HEK293 (cell line): ENCODE measurements at regions of chr7 and their contacts with region 1.

Region 1: GRCh38 chr7:106176414-106177299 is 64.5 kb upstream of the SYPL1 start:
- H3K4me3 ChIP-seq: no peak overlapping the region
- H3K27ac ChIP-seq: no peak overlapping the region
- H3K4me1 ChIP-seq: no peaks in the 10 kb centered on the region
- CTCF ChIP-seq: peak; percentile 95

Region 2: DNA sequence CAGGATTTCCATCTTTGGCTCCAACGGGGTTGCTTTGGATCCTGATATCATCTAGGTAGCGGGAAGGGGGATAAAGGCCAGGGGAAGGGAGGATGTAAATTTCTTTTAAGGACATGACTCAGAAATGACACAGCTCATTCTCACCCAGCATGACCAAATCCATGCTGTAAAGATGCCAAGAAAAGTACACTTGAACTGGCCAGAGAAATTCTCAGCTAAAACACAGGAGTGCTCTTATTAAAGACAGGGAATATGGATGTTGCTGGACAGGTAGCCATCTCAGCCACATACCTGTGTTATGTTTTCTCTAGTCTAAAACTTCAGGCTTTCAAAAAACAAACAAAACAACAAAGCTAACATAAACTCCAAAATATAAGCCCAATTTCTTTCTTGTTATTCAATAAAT is 39.9 kb after region 1 on chr7:
- CTCF ChIA-PET with region 1: interaction called, 10 read pairs
- POLR2A ChIA-PET with region 1: no interaction called
- H3K4me3 ChIP-seq: no peak overlapping the region
- H3K27ac ChIP-seq: no peak overlapping the region
- H3K4me1 ChIP-seq: 0 out of 2 replicates have a peak, but pooled peaks cover 3% of the 10 kb centered on the region
- CTCF ChIP-seq: no peak

Region 3: DNA sequence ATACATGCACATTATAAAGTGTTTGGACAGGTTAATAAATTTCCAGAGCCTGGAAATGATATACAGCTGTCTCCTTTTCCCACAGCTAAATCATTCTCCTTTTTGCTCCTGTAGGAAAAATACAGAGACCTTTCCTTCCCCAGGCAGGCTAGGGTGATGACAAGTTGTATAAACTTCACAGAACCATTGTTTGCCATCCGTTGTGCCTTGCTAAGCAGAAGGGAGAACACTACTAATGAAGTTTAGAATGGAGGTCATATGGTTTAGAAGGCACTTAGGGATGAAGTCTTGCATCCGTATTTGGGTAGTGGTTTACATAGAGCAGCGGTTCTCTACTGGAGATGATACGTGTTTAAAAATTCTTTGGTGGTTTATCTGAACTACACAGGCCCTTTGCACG is 62.2 kb after region 1 on chr7:
- CTCF ChIA-PET with region 1: no interaction called
- POLR2A ChIA-PET with region 1: no interaction called
- H3K4me3 ChIP-seq: no peak overlapping the region
- H3K27ac ChIP-seq: no peak overlapping the region
- H3K4me1 ChIP-seq: no peaks in the 10 kb centered on the region
- CTCF ChIP-seq: no peak

Region 4: DNA sequence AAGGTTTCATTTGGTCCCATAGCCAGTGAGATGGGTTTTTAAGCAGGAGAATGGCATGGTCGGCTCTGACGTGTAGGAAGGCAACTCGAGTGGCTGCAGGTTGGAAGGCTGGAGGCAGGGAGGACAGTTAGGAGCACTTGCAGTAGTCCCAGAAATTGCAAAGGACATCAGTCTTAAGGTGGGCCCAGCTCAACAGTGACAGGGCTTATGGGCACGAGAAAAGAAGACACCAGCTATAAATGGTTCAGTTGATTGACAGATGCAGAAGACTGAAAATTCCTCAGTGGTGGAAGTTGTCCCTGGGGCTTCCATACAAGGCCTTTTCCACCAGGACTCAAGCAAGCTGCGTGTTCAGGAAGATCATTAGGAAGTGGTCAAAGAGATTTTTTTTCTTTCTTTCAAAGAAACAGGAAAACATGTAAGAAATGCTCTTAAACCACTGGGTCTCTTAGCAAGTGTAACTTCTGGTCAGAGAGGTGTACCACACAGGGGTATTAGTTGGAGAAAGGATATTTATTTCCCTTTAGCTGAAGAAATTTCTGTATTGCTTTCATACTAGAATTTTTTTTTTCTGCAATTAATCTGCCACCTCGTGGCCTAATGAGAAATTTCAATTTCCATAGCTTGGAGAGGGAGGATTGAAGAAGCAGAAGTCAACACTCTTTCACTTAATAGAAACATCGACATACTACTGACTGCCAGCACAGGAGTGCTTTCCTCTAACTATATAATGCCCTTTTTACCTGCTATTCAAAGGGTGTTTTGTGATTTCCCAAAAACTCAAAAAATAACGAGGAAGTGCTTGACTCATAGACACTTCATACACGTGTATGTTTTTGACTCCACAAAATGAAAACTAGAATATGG is 285.6 kb after region 1 on chr7:
- CTCF ChIA-PET with region 1: interaction called, 164 read pairs
- POLR2A ChIA-PET with region 1: interaction called, 5 read pairs
- H3K4me3 ChIP-seq: no peak overlapping the region
- H3K27ac ChIP-seq: no peak overlapping the region
- H3K4me1 ChIP-seq: no peaks in the 10 kb centered on the region
- CTCF ChIP-seq: peak; percentile 27; the same call in 1 of the 2 replicates

Region 5: DNA sequence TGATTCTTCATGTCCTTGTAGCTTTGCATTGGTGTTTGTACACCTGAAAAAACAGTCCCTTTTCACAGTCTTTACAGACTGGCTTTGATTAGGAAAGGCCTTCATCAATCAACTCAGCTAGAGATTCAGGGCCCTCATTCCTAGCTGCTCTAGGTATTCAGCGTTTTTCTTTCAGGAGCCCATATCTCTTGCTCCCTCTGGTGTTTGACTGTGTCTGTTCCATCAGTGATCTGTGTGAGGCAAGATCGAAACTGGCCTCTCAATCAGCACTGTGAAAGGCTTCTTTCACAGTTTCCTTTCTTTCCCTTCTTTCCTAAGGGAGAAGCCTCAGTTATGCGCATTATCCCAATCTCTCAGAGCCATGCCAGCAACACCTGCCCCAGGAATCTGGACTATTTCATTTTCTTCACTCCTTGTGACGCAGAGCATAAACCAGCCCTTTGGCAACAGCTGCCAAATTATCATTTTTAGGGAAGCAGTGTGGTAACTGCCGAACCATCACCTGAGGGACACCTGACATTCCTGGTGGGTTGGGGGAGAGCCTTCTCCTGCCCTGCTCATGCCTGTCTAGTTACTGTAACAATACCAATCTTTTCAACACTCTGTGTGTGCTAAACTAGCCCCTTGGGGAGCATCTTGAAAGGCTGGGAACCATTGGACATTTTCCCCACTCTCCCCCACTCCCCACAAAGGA is 560.0 kb after region 1 on chr7:
- CTCF ChIA-PET with region 1: interaction called, 18 read pairs
- POLR2A ChIA-PET with region 1: interaction called, 3 read pairs
- H3K4me3 ChIP-seq: no peak overlapping the region
- H3K27ac ChIP-seq: no peak overlapping the region
- H3K4me1 ChIP-seq: no peaks in the 10 kb centered on the region
- CTCF ChIP-seq: peak; percentile 27; the same call in 1 of the 2 replicates

Region 6: DNA sequence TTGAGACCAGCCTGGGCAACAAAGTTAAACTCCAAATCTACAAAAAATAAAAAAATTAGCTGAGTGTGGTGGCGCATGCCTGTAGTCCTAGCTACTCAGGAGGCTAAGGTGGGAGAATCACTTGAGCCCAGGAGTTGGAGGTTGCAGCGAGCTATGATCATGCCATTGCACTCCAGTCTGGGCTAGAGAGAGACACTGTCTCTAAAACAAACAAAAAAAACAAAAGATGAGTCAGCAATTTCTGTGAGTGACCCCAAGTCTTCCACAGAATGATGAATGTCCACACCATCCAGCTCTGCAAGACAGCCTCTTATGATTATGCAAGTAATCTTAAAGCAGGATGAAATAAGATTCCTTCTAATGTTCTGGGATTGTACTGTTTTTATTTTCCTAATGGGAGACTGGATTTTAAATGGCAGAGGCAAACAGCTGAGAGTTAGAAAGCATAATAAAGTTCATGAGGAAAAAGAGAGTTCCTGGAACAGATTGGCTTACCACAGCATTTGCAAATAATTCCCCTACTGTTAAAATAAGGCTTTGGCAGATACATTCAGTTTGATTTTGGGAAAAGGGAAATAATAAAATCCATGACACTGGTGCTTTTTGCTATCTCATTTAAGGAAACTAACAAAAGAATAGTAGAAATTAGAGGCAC is 848.9 kb after region 1 on chr7:
- CTCF ChIA-PET with region 1: no interaction called
- POLR2A ChIA-PET with region 1: no interaction called
- H3K4me3 ChIP-seq: no peak overlapping the region
- H3K27ac ChIP-seq: no peak overlapping the region
- H3K4me1 ChIP-seq: peaks cover 3% of the 10 kb centered on the region; the same call in 1 of the 2 replicates
- CTCF ChIP-seq: no peak